CD4-positive, alpha-beta T cell (primary cell): ENCODE measurements at regions of chr2 and their contacts with region 1.

Region 1: DNA sequence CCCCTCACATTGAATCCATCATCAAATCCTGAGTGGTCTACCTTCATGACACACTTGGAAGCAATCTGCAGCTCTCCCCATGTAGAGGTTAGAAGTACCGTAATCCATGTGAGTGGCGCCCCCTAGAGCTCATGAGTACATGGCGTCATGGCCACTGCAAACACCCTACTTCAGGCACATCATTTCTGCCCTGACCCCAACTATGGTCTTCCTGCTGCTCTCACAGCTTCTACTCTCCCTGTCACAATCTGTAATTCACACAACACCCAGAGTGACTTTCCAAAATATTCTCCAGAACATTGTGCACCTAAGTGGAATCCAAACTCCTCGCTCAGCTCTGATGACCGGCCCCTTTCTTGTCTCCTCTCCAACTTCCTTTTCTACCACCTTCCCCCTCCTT is 141.9 kb downstream of the ANKRD44 start:
- DNase-seq: peak; percentile 51 to 83 (median 66)
- ATAC-seq: peak; percentile 92
- H3K4me3 ChIP-seq: no peak overlapping the region
- H3K4me3 Mint-ChIP-seq: peak overlapping the region; percentile 2
- H3K27ac ChIP-seq: peak overlapping the region in 1 of 2 donors; percentile 15
- H3K27ac Mint-ChIP-seq: peak overlapping the region; percentile 71
- H3K4me1 ChIP-seq: peaks cover 52% of the 10 kb centered on the region
- H3K4me1 Mint-ChIP-seq: peaks cover 80% of the 10 kb centered on the region
- H3K27me3 ChIP-seq: no peaks in the 10 kb centered on the region
- H3K27me3 Mint-ChIP-seq: no peaks in the 10 kb centered on the region
- CTCF ChIP-seq: peak; percentile 60

Region 2: GRCh38 chr2:195930082-195930481 is 1238.6 kb before region 1 on chr2:
- CTCF ChIA-PET with region 1: no interaction called
- POLR2A ChIA-PET with region 1: no interaction called
- intact Hi-C with region 1: no loop called
- DNase-seq: no peak
- ATAC-seq: no peak
- H3K4me3 ChIP-seq: no peak overlapping the region
- H3K4me3 Mint-ChIP-seq: no peak overlapping the region
- H3K27ac ChIP-seq: no peak overlapping the region
- H3K27ac Mint-ChIP-seq: no peak overlapping the region
- H3K4me1 ChIP-seq: no peaks in the 10 kb centered on the region
- H3K4me1 Mint-ChIP-seq: no peaks in the 10 kb centered on the region
- H3K27me3 ChIP-seq: no peaks in the 10 kb centered on the region
- H3K27me3 Mint-ChIP-seq: no peaks in the 10 kb centered on the region
- CTCF ChIP-seq: no peak

Region 3: GRCh38 chr2:196337208-196337953 is 831.3 kb before region 1 on chr2:
- CTCF ChIA-PET with region 1: no interaction called
- POLR2A ChIA-PET with region 1: no interaction called
- intact Hi-C with region 1: no loop called
- DNase-seq: peak in 8 of 14 experiments; percentile 7 to 64 (median 27)
- ATAC-seq: peak; percentile 39
- H3K4me3 ChIP-seq: no peak overlapping the region
- H3K4me3 Mint-ChIP-seq: no peak overlapping the region
- H3K27ac ChIP-seq: no peak overlapping the region
- H3K27ac Mint-ChIP-seq: no peak overlapping the region
- H3K4me1 ChIP-seq: no peaks in the 10 kb centered on the region
- H3K4me1 Mint-ChIP-seq: no peaks in the 10 kb centered on the region
- H3K27me3 ChIP-seq: no peaks in the 10 kb centered on the region
- H3K27me3 Mint-ChIP-seq: no peaks in the 10 kb centered on the region
- CTCF ChIP-seq: peak; percentile 71

Region 4: GRCh38 chr2:197130318-197130717 is 38.4 kb before region 1 on chr2:
- CTCF ChIA-PET with region 1: interaction called, 10 read pairs
- POLR2A ChIA-PET with region 1: interaction called, 4 read pairs
- intact Hi-C with region 1: loop called (anchors 5 kb)
- DNase-seq: peak in 4 of 14 experiments; percentile 27 to 56 (median 56)
- ATAC-seq: peak; percentile 94
- H3K4me3 ChIP-seq: no peak overlapping the region
- H3K4me3 Mint-ChIP-seq: peak overlapping the region; percentile 11
- H3K27ac ChIP-seq: peak overlapping the region in 1 of 2 donors; percentile 49
- H3K27ac Mint-ChIP-seq: peak overlapping the region; percentile 85
- H3K4me1 ChIP-seq: peaks cover 37% of the 10 kb centered on the region
- H3K4me1 Mint-ChIP-seq: peaks cover 92% of the 10 kb centered on the region
- H3K27me3 ChIP-seq: no peaks in the 10 kb centered on the region
- H3K27me3 Mint-ChIP-seq: no peaks in the 10 kb centered on the region
- CTCF ChIP-seq: no peak

Region 5: GRCh38 chr2:197137231-197137630 is 31.5 kb before region 1 on chr2:
- CTCF ChIA-PET with region 1: interaction called, 10 read pairs
- POLR2A ChIA-PET with region 1: interaction called, 3 read pairs
- intact Hi-C with region 1: loop called (anchors 5 kb)
- DNase-seq: peak in 3 of 14 experiments; percentile 27 to 33 (median 29)
- ATAC-seq: no peak
- H3K4me3 ChIP-seq: no peak overlapping the region
- H3K4me3 Mint-ChIP-seq: peak overlapping the region; percentile 8
- H3K27ac ChIP-seq: peak overlapping the region in 1 of 2 donors; percentile 58
- H3K27ac Mint-ChIP-seq: peak overlapping the region; percentile 85
- H3K4me1 ChIP-seq: peaks cover 60% of the 10 kb centered on the region
- H3K4me1 Mint-ChIP-seq: peaks cover 97% of the 10 kb centered on the region
- H3K27me3 ChIP-seq: no peaks in the 10 kb centered on the region
- H3K27me3 Mint-ChIP-seq: no peaks in the 10 kb centered on the region
- CTCF ChIP-seq: no peak